ENCODE measurements at regions of chr20 and their contacts with region 1.

Region 1: GRCh38 chr20:16573001-16573965 is at the start of gene KIF16B:
- DNase-seq: peak; percentile 89
- H3K4me3 Mint-ChIP-seq: peak within 1 kb of the TSS; percentile 86
- H3K27ac Mint-ChIP-seq: peak within 1 kb of the TSS; percentile 91
- H3K4me1 Mint-ChIP-seq: peaks cover 35% of the 10 kb centered on the region
- H3K27me3 Mint-ChIP-seq: no peaks in the 10 kb centered on the region
- CTCF ChIP-seq: peak; percentile 8
- total RNA-seq, gene KIF16B: 14.8 and 15.8 TPM in 2 replicates

Region 2: GRCh38 chr20:16444057-16444777 is 129.1 kb before region 1 on chr20:
- CTCF ChIA-PET with region 1: no interaction called
- POLR2A ChIA-PET with region 1: no interaction called
- intact Hi-C with region 1: loop called (anchors 5 kb)
- DNase-seq: peak; percentile 2
- H3K4me3 Mint-ChIP-seq: no peak overlapping the region
- H3K27ac Mint-ChIP-seq: no peak overlapping the region
- H3K4me1 Mint-ChIP-seq: peaks cover 5% of the 10 kb centered on the region
- H3K27me3 Mint-ChIP-seq: no peaks in the 10 kb centered on the region
- CTCF ChIP-seq: no peak

Region 3: GRCh38 chr20:16517946-16518783 is 55.1 kb before region 1 on chr20:
- CTCF ChIA-PET with region 1: interaction called, 19 read pairs
- POLR2A ChIA-PET with region 1: no interaction called
- intact Hi-C with region 1: loop called (anchors 1 kb)
- DNase-seq: peak; percentile 65
- H3K4me3 Mint-ChIP-seq: no peak overlapping the region
- H3K27ac Mint-ChIP-seq: no peak overlapping the region
- H3K4me1 Mint-ChIP-seq: no peaks in the 10 kb centered on the region
- H3K27me3 Mint-ChIP-seq: no peaks in the 10 kb centered on the region
- CTCF ChIP-seq: peak; percentile 66

Region 4: GRCh38 chr20:16528078-16528477 is 45.2 kb before region 1 on chr20:
- CTCF ChIA-PET with region 1: interaction called, 4 read pairs
- POLR2A ChIA-PET with region 1: interaction called, 26 read pairs
- intact Hi-C with region 1: loop called (anchors 2 kb)
- DNase-seq: peak; percentile 94
- H3K4me3 Mint-ChIP-seq: peak overlapping the region; percentile 40
- H3K27ac Mint-ChIP-seq: peak overlapping the region; percentile 91
- H3K4me1 Mint-ChIP-seq: peaks cover 34% of the 10 kb centered on the region
- H3K27me3 Mint-ChIP-seq: no peaks in the 10 kb centered on the region
- CTCF ChIP-seq: no peak

Region 5: DNA sequence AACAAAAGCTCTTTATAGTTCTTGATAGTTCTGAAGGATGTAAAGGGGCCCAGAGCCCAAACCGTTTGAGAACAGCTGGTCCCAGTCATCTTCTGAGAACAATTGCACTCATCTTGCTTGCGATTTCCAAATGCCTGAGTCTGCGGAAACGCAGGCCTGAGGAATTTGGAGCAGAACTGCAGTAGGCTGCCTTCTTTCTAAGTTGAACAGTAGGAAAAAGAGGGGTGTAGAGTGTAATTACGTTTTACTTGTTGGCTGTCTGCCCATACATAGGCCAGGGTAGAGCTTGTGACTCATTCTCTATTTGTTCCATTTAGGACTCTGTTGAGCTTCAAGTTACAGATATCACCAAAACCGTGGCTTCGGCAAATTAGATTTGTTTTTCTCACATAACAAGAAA is 41.9 kb after region 1 on chr20:
- CTCF ChIA-PET with region 1: no interaction called
- POLR2A ChIA-PET with region 1: interaction called, 15 read pairs
- intact Hi-C with region 1: no loop called
- DNase-seq: peak; percentile 90
- H3K4me3 Mint-ChIP-seq: no peak overlapping the region
- H3K27ac Mint-ChIP-seq: peak overlapping the region; percentile 65
- H3K4me1 Mint-ChIP-seq: peaks cover 21% of the 10 kb centered on the region
- H3K27me3 Mint-ChIP-seq: no peaks in the 10 kb centered on the region
- CTCF ChIP-seq: no peak

Region 6: DNA sequence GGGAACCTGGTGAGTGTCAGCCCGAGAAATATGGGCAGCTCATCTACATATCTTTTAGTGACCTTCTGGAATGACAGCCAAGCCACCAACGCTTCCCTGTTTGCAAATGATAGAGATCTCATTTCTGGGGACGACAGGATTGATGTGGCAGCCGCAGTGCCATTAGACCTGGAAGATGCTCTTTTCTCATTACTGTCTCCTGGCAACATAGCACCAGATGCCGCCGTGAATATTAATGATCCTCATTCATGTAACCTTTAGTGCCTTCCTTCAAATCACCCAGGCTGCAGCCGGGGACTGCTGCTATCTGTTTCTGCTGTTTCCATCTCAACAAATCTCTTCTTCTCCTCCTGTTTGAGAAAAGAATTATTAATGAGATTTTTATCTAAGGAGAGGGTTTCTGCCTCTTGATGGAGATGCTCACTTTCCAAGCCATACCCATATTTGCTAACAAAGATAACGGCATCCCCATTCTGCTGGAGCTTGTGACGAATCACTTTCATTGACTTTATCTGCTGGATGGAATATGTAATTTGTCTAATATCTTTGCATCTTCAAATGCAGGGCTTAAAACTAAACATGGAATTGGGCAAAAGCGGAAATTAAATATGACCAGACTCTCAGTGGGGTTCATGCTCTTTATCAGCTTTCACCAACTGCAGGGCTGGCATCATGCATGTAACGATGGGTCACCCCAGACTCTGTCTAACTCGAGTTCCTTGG is 74.8 kb after region 1 on chr20:
- CTCF ChIA-PET with region 1: no interaction called
- POLR2A ChIA-PET with region 1: no interaction called
- intact Hi-C with region 1: no loop called
- DNase-seq: no peak
- H3K4me3 Mint-ChIP-seq: no peak overlapping the region
- H3K27ac Mint-ChIP-seq: no peak overlapping the region
- H3K4me1 Mint-ChIP-seq: no peaks in the 10 kb centered on the region
- H3K27me3 Mint-ChIP-seq: peaks cover 33% of the 10 kb centered on the region
- CTCF ChIP-seq: no peak